Activated T-helper 2 cell treated with anti-CD3 and anti-CD28 coated beads, Interferon-gamma antibody, Interleukin-2, Interleukin-4, amounts not matched to agents 10 μg/mL and 5 μg/mL and 100 μg/mL, durations not matched to agents 14 hours and 24 hours and 36 hours (primary cell): ENCODE measurements at regions of chr19 and their contacts with region 1.

Region 1: DNA sequence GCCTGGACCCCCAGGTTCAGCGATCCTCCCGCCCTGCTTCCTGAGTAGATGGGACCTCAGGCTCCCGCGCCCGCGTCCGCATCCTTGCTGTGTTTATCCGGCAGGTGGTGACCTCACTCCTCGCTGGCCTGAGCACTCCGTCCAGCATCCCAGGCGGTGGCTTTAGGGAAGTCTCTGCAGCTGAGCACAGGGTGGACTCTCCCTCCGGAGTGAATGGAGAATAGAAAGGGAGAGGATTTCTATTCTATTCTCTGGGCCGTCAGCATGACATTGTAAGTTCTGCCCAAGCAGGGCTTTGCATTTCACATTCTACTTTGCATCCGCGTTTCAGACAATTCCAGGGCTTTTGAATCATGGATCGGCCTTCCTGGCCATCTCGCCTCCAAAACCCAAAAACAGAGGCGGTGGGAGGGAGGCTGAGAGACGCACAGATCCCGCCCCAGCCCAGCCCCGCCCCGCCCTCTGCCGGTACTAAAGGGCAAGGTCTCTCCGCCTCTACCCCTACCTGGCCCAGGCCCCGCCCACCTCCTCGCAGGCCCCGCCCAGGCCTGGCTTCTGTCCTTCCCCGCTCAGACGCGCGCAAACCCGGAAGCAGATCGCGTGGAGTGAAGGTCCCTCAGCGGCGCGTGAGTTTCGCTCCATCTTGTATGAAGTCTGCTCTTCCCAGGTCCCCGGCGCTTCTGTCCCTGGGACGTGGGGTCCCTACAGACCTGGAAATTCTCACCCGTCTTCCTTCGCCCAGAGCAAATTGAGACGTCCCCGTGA is at the start of gene ZNF525:
- DNase-seq: peak; percentile 91
- H3K4me3 Mint-ChIP-seq: peak within 1 kb of the TSS; percentile 88
- H3K27ac Mint-ChIP-seq: peak within 1 kb of the TSS; percentile 87
- H3K4me1 Mint-ChIP-seq: peaks cover 8% of the 10 kb centered on the region
- H3K27me3 Mint-ChIP-seq: no peaks in the 10 kb centered on the region
- total RNA-seq, gene ZNF525: 14.2 and 15.0 TPM in 2 replicates

Region 2: DNA sequence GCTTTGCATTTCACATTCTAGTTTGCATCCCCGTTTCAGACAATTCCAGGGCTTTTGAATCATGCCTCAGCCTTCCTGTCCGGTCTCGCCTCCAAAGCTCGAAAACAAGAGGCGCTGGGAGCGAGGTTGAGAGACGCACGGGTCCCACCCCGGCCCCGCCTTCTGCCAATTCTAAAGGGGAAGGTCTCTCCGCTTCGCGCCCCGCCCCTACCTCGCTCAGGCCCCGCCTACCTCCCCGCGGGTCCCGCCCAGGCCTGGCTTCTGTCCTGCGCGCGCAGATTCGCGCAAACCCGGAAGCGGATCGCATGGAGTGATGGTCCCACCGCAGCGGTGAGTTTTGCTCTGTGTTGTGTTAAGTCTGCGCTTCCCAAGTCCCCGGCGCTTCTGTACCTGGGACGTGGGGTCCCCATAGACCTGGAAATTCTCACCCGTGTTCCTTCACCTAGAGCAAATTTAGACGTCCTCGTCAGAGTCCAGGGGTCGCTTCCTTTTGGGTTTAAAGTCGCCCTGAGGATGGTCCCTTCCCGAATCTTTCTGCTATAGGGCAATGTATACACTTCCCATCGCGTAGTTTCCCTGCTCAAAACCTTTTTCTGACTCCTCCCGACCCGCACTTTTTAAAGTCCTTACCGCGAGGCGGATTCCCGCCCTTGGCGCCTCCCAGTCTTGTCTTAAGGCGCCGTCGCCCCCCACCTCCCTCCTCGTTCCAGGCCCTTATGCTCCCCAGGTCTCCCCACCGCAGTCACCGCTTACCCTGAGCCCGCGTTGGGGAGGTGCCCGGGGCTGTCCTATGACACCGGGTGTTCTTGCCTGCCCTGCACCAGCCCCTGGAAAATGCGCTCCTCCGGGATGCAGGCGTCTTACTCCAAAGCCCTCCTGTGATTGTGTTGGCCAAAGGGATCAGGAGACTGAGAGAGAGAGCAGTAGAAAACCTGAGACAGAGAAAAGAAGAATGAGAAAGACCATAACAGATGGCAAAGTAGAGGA is 31.6 kb before region 1 on chr19 and contains the start of gene ZNF845:
- intact Hi-C with region 1: loop called (anchors 1 kb)
- DNase-seq: peak; percentile 95
- H3K4me3 Mint-ChIP-seq: peak within 1 kb of the TSS; percentile 89
- H3K27ac Mint-ChIP-seq: peak within 1 kb of the TSS; percentile 87
- H3K4me1 Mint-ChIP-seq: peaks cover 5% of the 10 kb centered on the region
- H3K27me3 Mint-ChIP-seq: no peaks in the 10 kb centered on the region
- total RNA-seq, gene ZNF845: 5.6 and 5.9 TPM in 2 replicates

Region 3: DNA sequence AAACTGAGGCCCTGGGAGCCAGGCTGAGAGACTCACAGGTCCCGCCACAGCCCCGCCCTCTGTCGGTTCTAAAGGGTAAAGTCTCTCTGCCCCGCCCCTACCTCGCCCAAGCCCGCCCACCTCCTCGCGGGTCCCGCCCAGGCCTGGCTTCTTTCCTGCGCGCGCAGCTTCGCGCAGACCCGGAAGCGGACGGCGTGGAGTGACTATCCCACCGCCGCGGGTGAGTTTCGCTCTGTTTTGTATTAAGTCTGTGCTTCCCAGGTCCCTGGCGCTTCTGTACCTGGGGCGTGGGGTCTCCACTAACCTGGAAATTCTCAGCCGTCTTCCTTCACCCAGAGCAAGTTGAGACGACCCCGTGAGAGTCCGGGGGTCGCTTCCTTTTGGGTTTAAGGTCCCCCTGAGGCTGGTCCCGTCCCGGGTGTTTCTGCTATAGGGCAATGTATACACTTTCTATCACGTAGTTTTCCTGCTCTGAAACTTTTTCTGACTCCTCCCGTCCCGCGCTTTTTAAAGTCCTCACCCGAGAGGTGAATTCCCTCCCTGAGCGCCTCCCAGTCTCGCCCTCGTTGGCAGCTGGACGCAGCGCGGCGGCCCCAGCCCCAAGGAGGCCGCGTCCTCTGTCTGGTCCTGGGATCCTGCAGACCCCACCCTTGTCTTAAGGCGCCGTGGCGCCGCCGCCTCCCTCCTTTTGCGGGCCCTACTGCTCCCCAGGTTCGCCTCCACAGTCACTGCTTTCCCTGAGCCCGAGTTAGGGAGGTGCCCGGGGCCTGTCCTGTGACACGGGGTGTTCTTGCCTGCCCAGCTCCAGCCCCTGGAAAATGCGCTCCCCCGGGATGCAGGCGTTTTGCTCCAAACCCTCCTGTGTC is 29.9 kb after region 1 on chr19 and contains the start of gene ZNF765:
- intact Hi-C with region 1: loop called (anchors 1 kb)
- DNase-seq: peak; percentile 91
- H3K4me3 Mint-ChIP-seq: peak within 1 kb of the TSS; percentile 98
- H3K27ac Mint-ChIP-seq: peak within 1 kb of the TSS; percentile 83
- H3K4me1 Mint-ChIP-seq: peaks cover 19% of the 10 kb centered on the region
- H3K27me3 Mint-ChIP-seq: no peaks in the 10 kb centered on the region
- total RNA-seq, gene ZNF765: 10.5 TPM in 2 replicates

Region 4: GRCh38 chr19:53467485-53468262 is 102.4 kb after region 1 on chr19 and contains the start of gene ZNF813:
- intact Hi-C with region 1: loop called (anchors 10 kb)
- DNase-seq: peak; percentile 87
- H3K4me3 Mint-ChIP-seq: peak within 1 kb of the TSS; percentile 85
- H3K27ac Mint-ChIP-seq: peak within 1 kb of the TSS; percentile 76
- H3K4me1 Mint-ChIP-seq: peaks cover 12% of the 10 kb centered on the region
- H3K27me3 Mint-ChIP-seq: no peaks in the 10 kb centered on the region
- total RNA-seq, gene ZNF813: 3.4 TPM in 2 replicates

Region 5: DNA sequence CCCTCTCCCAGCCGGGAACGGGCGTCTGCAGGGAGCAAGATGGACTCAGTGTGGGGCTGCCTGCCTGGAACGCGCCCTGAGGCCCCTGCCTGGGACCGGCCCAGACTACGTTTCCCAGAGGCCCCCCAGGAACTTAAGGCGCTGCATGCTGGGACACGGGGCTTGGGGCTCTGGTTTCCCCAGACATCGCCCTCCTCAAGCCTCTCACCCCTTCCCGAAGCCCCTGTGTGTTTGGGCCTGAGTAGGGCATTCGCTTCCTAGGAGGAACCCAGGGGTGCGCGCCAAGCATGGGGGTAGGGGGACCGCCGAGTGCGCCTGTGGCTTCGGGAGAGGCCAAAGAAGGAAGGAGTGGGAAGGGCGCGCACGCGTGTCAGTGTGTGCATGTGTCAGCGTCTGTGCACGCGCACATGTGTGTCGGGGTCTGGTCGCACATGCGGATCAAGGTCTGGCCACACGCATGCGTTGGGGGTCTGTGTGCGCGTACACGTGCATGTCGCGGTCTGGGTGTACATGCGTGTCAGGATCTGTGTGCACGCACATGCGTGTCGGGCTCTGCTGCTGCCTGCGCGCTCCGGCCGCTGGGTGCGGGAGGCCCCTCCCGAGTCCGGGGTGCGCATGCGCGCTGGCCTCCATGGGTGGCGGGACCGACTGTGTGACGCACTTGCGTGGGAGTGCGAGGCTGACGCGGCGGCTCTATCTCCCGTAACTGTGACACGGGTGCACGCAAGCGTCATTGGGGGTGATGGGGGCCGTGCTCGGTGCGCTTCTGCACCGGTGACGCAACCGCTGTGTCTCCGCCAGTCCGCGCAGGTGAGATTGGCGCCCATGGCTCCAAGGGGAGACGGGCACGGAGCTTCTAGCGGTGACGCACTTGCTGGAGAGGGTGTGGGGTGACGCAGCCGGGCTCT is 188.8 kb after region 1 on chr19:
- intact Hi-C with region 1: loop called (anchors 5 kb)
- DNase-seq: peak; percentile 86
- H3K4me3 Mint-ChIP-seq: peak overlapping the region; percentile 89
- H3K27ac Mint-ChIP-seq: peak overlapping the region; percentile 94
- H3K4me1 Mint-ChIP-seq: peaks cover 16% of the 10 kb centered on the region
- H3K27me3 Mint-ChIP-seq: no peaks in the 10 kb centered on the region